ENCODE measurements at regions of chr19 and their contacts with region 1.

Region 1: GRCh38 chr19:44841231-44841630 is 4.9 kb upstream of the NECTIN2 start:
- DNase-seq: no peak
- ATAC-seq: no peak
- H3K4me3 ChIP-seq: no peak overlapping the region
- H3K27ac ChIP-seq: no peak overlapping the region
- H3K4me1 ChIP-seq: peaks cover 17% of the 10 kb centered on the region
- H3K27me3 ChIP-seq: no peaks in the 10 kb centered on the region
- CTCF ChIP-seq: no peak
- POLR2A ChIP-seq: no peak

Region 2: GRCh38 chr19:44796701-44797115 is 44.5 kb before region 1 on chr19:
- intact Hi-C with region 1: loop called (anchors 5 kb)
- DNase-seq: peak; percentile 57 to 82 (median 74)
- ATAC-seq: peak; percentile 83
- H3K4me3 ChIP-seq: no peak overlapping the region
- H3K27ac ChIP-seq: peak overlapping the region; percentile 52 to 78 (median 74)
- H3K4me1 ChIP-seq: peaks cover 26% of the 10 kb centered on the region
- H3K27me3 ChIP-seq: no peaks in the 10 kb centered on the region
- CTCF ChIP-seq: no peak
- POLR2A ChIP-seq: no peak